Pancreas (tissue), 10 donors: ENCODE measurements at regions of chr12 and their contacts with region 1.

Region 1: GRCh38 chr12:125402874-125403789 is 337.9 kb downstream of the AACS start:
- DNase-seq: no peak
- ATAC-seq: peak in 1 of 4 donors; percentile 46
- H3K4me3 ChIP-seq: no peak overlapping the region
- H3K27ac ChIP-seq: no peak overlapping the region
- H3K4me1 ChIP-seq: no peaks in the 10 kb centered on the region
- H3K27me3 ChIP-seq: peaks cover 0 to 4% (median 0%) of the 10 kb centered on the region in 4 donors
- CTCF ChIP-seq: peak in 3 of 4 donors; percentile 26 to 38 (median 35)

Region 2: GRCh38 chr12:125183187-125184067 is 219.7 kb before region 1 on chr12:
- intact Hi-C with region 1: loop called in 2 of 3 experiments (anchors 5 to 10 kb)
- DNase-seq: peak; percentile 58 to 96 (median 81)
- ATAC-seq: peak; percentile 82 to 87 (median 87)
- H3K4me3 ChIP-seq: no peak overlapping the region
- H3K27ac ChIP-seq: no peak overlapping the region
- H3K4me1 ChIP-seq: peaks cover 0 to 5% (median 4%) of the 10 kb centered on the region in 3 donors
- H3K27me3 ChIP-seq: peaks cover 0 to 12% (median 4%) of the 10 kb centered on the region in 4 donors
- CTCF ChIP-seq: peak; percentile 94 to 99 (median 97)

Region 3: DNA sequence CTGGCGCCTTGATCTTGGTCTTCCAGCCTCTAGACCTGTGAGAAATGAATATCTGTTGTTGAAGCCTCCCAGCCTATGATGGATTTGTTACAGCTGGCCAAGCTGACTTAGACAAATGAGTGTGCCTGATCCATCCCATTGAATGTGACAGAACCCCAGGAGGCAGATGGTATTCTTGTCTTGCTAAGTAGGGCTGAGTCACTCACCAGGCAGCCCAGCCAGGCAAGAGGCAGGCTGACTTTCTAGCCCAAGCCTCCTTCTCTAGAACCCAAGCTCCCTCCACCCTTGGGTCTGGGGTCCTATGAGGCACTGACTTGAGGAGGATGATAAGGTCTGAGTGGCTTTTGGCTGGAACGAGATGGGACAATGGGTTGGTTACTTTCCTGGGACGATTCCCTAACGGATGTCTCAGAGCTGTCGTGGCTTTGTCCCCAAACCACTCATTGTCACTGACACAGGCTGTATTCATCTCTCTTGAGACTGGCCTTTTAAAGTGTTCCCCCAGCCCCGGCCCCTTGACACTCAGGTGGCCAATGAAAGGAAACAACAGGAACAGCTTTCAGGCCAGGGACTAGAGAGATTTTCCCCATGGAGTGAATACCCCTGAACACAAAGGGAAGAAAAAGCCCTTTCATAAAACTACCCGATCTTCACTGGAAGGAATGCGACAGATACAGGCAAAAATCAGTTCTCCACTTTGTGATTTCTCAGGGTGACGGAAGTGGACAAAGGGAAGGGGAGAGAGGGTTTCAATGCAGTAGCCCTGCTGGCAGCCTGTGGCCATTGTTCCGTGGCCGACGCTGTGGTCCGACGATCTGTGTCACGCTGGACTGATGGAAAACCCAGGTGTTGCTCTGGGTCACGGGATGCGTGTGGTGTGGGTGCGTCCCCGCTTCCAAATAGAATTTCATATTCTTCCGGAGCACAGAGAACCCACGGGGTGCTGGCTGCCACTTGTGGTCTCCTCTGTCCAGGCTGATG is 73.6 kb before region 1 on chr12:
- intact Hi-C with region 1: loop called in 1 of 3 experiments (anchors 10 kb)
- DNase-seq: no peak
- ATAC-seq: no peak
- H3K4me3 ChIP-seq: no peak overlapping the region
- H3K27ac ChIP-seq: no peak overlapping the region
- H3K4me1 ChIP-seq: no peaks in the 10 kb centered on the region
- H3K27me3 ChIP-seq: peaks cover 0 to 9% (median 2%) of the 10 kb centered on the region in 4 donors
- CTCF ChIP-seq: no peak

Region 4: DNA sequence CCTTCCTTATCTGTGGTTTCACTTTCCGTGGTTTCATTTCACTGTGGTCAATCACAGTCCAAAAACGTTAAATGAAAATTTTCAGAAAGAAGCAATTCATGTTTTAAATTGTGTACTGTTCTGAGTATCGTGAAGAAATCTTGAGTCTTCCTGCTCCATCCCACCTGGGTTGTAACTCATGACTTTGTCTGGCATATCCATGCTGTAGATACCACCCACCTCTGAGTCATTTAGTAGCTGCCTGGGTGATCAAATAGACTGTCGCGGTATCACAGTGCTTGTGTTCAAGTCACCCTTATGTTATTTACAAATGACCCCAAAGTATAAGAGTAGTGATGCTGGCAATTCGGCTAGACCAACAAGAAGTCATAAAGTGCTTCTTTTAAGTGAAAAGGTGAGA is 183.3 kb after region 1 on chr12:
- intact Hi-C with region 1: no loop called
- DNase-seq: no peak
- ATAC-seq: no peak
- H3K4me3 ChIP-seq: no peak overlapping the region
- H3K27ac ChIP-seq: no peak overlapping the region
- H3K4me1 ChIP-seq: no peaks in the 10 kb centered on the region
- H3K27me3 ChIP-seq: no peaks in the 10 kb centered on the region
- CTCF ChIP-seq: no peak